Caco-2 (cell line): ENCODE measurements at regions of chr3 and their contacts with region 1.

Region 1: GRCh38 chr3:96731031-96731430 is 83.4 kb upstream of the EPHA6 start:
- DNase-seq: peak in 1 of 2 experiments; percentile 79
- H3K4me3 ChIP-seq: no peak overlapping the region
- H3K4me3 Mint-ChIP-seq: no peak overlapping the region
- H3K27ac Mint-ChIP-seq: no peak overlapping the region
- H3K4me1 ChIP-seq: peaks cover 34% of the 10 kb centered on the region
- H3K4me1 Mint-ChIP-seq: peaks cover 24% of the 10 kb centered on the region
- H3K27me3 ChIP-seq: no peaks in the 10 kb centered on the region
- H3K27me3 Mint-ChIP-seq: no peaks in the 10 kb centered on the region
- CTCF ChIP-seq: no peak

Region 2: GRCh38 chr3:94967196-94967595 is 1763.8 kb before region 1 on chr3:
- CTCF ChIA-PET with region 1: no interaction called
- POLR2A ChIA-PET with region 1: no interaction called
- intact Hi-C with region 1: loop called (anchors 1 kb)
- DNase-seq: peak; percentile 66 to 79
- H3K4me3 ChIP-seq: no peak overlapping the region
- H3K4me3 Mint-ChIP-seq: no peak overlapping the region
- H3K27ac Mint-ChIP-seq: peak overlapping the region; percentile 18
- H3K4me1 ChIP-seq: peaks cover 37% of the 10 kb centered on the region
- H3K4me1 Mint-ChIP-seq: peaks cover 41% of the 10 kb centered on the region
- H3K27me3 ChIP-seq: no peaks in the 10 kb centered on the region
- H3K27me3 Mint-ChIP-seq: no peaks in the 10 kb centered on the region
- CTCF ChIP-seq: no peak

Region 3: GRCh38 chr3:96576935-96577334 is 154.1 kb before region 1 on chr3:
- CTCF ChIA-PET with region 1: no interaction called
- POLR2A ChIA-PET with region 1: no interaction called
- intact Hi-C with region 1: no loop called
- DNase-seq: no peak
- H3K4me3 ChIP-seq: no peak overlapping the region
- H3K4me3 Mint-ChIP-seq: no peak overlapping the region
- H3K27ac Mint-ChIP-seq: no peak overlapping the region
- H3K4me1 ChIP-seq: no peaks in the 10 kb centered on the region
- H3K4me1 Mint-ChIP-seq: no peaks in the 10 kb centered on the region
- H3K27me3 ChIP-seq: no peaks in the 10 kb centered on the region
- H3K27me3 Mint-ChIP-seq: no peaks in the 10 kb centered on the region
- CTCF ChIP-seq: no peak

Region 4: GRCh38 chr3:96705895-96706294 is 25.1 kb before region 1 on chr3:
- CTCF ChIA-PET with region 1: no interaction called
- POLR2A ChIA-PET with region 1: no interaction called
- intact Hi-C with region 1: loop called (anchors 1 kb)
- DNase-seq: no peak
- H3K4me3 ChIP-seq: no peak overlapping the region
- H3K4me3 Mint-ChIP-seq: no peak overlapping the region
- H3K27ac Mint-ChIP-seq: peak overlapping the region; percentile 79
- H3K4me1 ChIP-seq: peaks cover 25% of the 10 kb centered on the region
- H3K4me1 Mint-ChIP-seq: peaks cover 11% of the 10 kb centered on the region
- H3K27me3 ChIP-seq: no peaks in the 10 kb centered on the region
- H3K27me3 Mint-ChIP-seq: no peaks in the 10 kb centered on the region
- CTCF ChIP-seq: no peak

Region 5: GRCh38 chr3:96756516-96756915 is 25.5 kb after region 1 on chr3:
- CTCF ChIA-PET with region 1: no interaction called
- POLR2A ChIA-PET with region 1: no interaction called
- intact Hi-C with region 1: loop called (anchors 1 kb)
- DNase-seq: peak; percentile 69 to 70
- H3K4me3 ChIP-seq: no peak overlapping the region
- H3K4me3 Mint-ChIP-seq: peak overlapping the region; percentile 57
- H3K27ac Mint-ChIP-seq: peak overlapping the region; percentile 95
- H3K4me1 ChIP-seq: peaks cover 38% of the 10 kb centered on the region
- H3K4me1 Mint-ChIP-seq: peaks cover 24% of the 10 kb centered on the region
- H3K27me3 ChIP-seq: no peaks in the 10 kb centered on the region
- H3K27me3 Mint-ChIP-seq: no peaks in the 10 kb centered on the region
- CTCF ChIP-seq: no peak

Region 6: GRCh38 chr3:96803860-96804259 is 72.8 kb after region 1 on chr3:
- CTCF ChIA-PET with region 1: no interaction called
- POLR2A ChIA-PET with region 1: no interaction called
- intact Hi-C with region 1: loop called (anchors 1 kb)
- DNase-seq: peak in 1 of 2 experiments; percentile 16
- H3K4me3 ChIP-seq: no peak overlapping the region
- H3K4me3 Mint-ChIP-seq: no peak overlapping the region
- H3K27ac Mint-ChIP-seq: peak overlapping the region; percentile 19
- H3K4me1 ChIP-seq: peaks cover 9% of the 10 kb centered on the region; the same call in 1 of the 2 replicates
- H3K4me1 Mint-ChIP-seq: no peaks in the 10 kb centered on the region
- H3K27me3 ChIP-seq: no peaks in the 10 kb centered on the region
- H3K27me3 Mint-ChIP-seq: no peaks in the 10 kb centered on the region
- CTCF ChIP-seq: no peak